Activated CD4-positive, alpha-beta T cell treated with anti-CD3 and anti-CD28 coated beads for 36 hours (primary cell): ENCODE measurements at regions of chr19 and their contacts with region 1.

Region 1: GRCh38 chr19:36139473-36140303 is at the start of gene CAPNS1:
- DNase-seq: peak; percentile 96
- ATAC-seq: peak; percentile 74
- H3K4me3 Mint-ChIP-seq: peak within 1 kb of the TSS; percentile 97
- H3K27ac Mint-ChIP-seq: peak within 1 kb of the TSS; percentile 97
- H3K4me1 Mint-ChIP-seq: peaks cover 26% of the 10 kb centered on the region
- H3K27me3 Mint-ChIP-seq: no peaks in the 10 kb centered on the region
- total RNA-seq, gene CAPNS1: 345 to 452 TPM

Region 2: GRCh38 chr19:35612559-35613321 is 526.9 kb before region 1 on chr19 and contains the start of gene HAUS5:
- CTCF ChIA-PET with region 1: no interaction called
- POLR2A ChIA-PET with region 1: no interaction called
- intact Hi-C with region 1: no loop called
- DNase-seq: peak; percentile 98
- ATAC-seq: peak; percentile 96
- H3K4me3 Mint-ChIP-seq: peak within 1 kb of the TSS; percentile 81
- H3K27ac Mint-ChIP-seq: peak within 1 kb of the TSS; percentile 90
- H3K4me1 Mint-ChIP-seq: peaks cover 23% of the 10 kb centered on the region
- H3K27me3 Mint-ChIP-seq: no peaks in the 10 kb centered on the region
- total RNA-seq, gene HAUS5: 39.7 to 41.0 TPM

Region 3: DNA sequence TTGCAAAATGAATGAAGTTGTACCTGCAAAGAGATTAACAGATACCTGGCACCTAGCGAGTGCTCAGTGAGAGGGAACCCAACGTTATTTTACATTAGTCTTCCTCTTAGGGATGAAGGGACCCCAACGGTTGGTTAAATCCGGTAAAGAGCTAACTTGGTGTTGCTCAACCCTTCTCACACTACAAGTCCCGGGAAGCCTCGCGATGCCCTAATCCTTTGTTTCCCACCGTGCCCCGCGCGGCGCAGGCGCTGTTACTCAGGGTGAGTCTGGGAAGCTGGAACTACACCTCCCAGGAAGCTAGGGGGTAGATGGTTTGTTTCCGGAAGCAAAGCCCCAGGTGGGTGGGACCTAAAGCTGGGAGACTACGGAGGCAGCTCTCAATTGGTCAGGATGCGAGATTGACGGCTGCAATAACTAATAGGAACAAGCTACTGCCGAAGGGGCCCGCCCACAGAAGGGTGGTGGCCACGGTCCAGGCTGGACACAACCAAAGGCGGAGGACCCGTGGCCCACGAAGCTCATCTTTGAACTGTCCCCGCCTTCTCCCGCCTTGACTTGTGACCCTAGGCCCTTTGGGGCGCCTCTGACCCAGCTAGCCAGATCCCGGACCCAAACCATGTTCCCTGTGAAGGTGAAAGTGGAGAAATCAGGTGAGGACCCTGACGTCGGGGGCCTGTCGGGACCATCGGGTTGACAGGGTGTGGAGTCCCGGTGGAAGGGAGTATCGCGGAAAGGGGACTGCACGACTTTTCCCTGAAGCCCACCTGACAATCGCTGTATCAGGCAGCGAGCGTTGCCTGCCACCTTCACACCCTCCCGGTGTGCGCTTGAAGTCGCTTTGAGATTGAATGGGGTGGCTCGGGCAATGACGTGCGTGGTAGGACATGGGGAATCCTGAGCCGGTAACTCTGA is 391.3 kb before region 1 on chr19 and contains the start of gene LIN37:
- CTCF ChIA-PET with region 1: no interaction called
- POLR2A ChIA-PET with region 1: no interaction called
- intact Hi-C with region 1: loop called in 1 of 2 experiments (anchors 1 kb)
- DNase-seq: peak; percentile 99
- ATAC-seq: peak; percentile 81
- H3K4me3 Mint-ChIP-seq: peak within 1 kb of the TSS; percentile 89
- H3K27ac Mint-ChIP-seq: peak within 1 kb of the TSS; percentile 94
- H3K4me1 Mint-ChIP-seq: peaks cover 40% of the 10 kb centered on the region
- H3K27me3 Mint-ChIP-seq: no peaks in the 10 kb centered on the region
- total RNA-seq, gene LIN37: 8.4 to 12.7 TPM

Region 4: DNA sequence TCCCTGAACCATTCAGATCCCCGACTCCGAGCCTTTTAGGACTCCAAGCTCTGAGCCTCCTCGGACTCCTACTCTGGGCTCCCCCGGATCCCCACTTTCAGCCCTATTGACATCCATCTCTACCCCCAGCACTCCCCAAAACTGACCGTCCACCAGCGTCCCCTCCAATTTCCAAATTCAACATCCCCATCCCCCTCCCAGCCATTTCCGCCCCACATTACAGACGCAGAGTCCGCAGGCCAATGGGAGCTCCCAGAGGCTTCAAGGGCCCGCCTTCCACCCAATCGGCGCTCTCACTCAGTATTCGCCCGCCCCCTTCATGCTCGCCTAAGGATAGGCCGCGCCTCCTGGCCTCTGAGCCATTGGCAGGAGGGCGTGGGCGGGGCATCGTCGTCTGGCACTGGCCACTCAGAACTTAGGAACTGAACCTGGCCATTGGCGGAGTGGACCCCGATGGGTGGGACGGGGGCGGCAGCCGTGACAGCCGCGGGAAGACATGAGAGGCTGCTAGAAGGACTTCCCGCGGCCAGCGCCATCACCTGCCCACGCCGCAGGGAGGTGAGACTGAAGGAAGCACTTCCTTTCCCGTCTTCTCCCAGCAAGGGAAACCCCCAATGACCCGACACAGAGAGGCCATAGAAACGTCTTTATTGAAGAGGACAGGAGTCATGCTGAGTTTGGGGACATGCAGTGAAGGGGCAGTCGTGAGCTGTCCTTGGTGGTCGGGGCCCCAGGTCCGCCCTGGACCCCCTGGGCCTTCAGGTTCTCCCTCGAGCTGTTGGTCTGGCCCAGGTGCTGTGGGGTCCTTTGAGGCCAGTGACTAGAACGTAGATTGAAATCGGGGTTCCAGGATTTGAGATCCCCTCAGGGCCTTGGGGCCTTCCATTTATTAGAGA is 125.4 kb before region 1 on chr19 and contains the start of gene ALKBH6:
- CTCF ChIA-PET with region 1: no interaction called
- POLR2A ChIA-PET with region 1: no interaction called
- intact Hi-C with region 1: loop called in 1 of 2 experiments (anchors 1 kb)
- DNase-seq: peak; percentile 100
- ATAC-seq: peak; percentile 98
- H3K4me3 Mint-ChIP-seq: peak within 1 kb of the TSS; percentile 96
- H3K27ac Mint-ChIP-seq: peak within 1 kb of the TSS; percentile 94
- H3K4me1 Mint-ChIP-seq: peaks cover 32% of the 10 kb centered on the region
- H3K27me3 Mint-ChIP-seq: no peaks in the 10 kb centered on the region
- total RNA-seq, gene ALKBH6: 40.6 to 42.2 TPM

Region 5: GRCh38 chr19:36225219-36225892 is 85.7 kb after region 1 on chr19:
- CTCF ChIA-PET with region 1: no interaction called
- POLR2A ChIA-PET with region 1: no interaction called
- intact Hi-C with region 1: no loop called
- DNase-seq: no peak
- ATAC-seq: no peak
- H3K4me3 Mint-ChIP-seq: no peak overlapping the region
- H3K27ac Mint-ChIP-seq: peak overlapping the region; percentile 48
- H3K4me1 Mint-ChIP-seq: peaks cover 24% of the 10 kb centered on the region
- H3K27me3 Mint-ChIP-seq: no peaks in the 10 kb centered on the region

Region 6: GRCh38 chr19:36605101-36605876 is 465.6 kb after region 1 on chr19 and contains the start of gene ZNF382:
- CTCF ChIA-PET with region 1: no interaction called
- POLR2A ChIA-PET with region 1: no interaction called
- intact Hi-C with region 1: loop called in 1 of 2 experiments (anchors 10 kb)
- DNase-seq: peak; percentile 94
- ATAC-seq: peak; percentile 86
- H3K4me3 Mint-ChIP-seq: peak within 1 kb of the TSS; percentile 81
- H3K27ac Mint-ChIP-seq: peak within 1 kb of the TSS; percentile 91
- H3K4me1 Mint-ChIP-seq: peaks cover 20% of the 10 kb centered on the region
- H3K27me3 Mint-ChIP-seq: no peaks in the 10 kb centered on the region
- total RNA-seq, gene ZNF382: 14.9 to 20.0 TPM